Left ventricle myocardium superior (tissue), 1 donor: ENCODE measurements at regions of chr9 and their contacts with region 1.

Region 1: DNA sequence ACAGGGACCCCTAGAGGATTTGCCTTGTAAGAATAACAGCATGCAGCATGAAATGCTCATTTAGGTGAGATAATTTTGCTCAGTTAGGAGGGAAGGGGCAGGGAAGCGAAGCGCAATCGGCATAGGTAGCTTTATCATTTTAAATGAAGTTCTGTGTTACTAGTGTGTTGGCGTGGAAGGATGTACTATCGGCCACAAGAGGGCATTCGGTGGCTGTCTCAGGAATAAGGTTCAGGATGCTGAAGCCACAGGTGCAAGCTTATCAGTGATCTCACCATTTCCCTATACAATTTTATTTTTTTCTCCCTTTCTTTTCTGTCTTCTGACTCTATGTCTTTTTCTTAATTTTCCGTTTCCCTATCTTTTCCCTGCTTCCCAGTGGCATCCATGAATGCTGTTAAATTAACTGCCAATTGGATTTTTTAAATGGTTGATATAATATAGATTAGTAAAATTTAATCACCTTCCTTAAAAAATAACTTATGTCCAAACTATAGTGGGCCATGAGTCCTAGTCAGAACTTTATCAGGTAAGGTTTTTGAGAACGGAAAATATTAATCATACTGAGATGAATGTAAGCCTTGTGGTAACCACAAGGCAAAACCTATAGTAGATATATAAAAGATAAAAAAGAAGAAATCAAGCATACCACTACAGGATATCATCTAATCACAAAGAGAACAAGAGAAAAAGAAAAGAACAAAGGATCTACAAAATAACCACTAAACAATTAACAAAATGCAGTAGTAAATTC is 1.2 kb upstream of the INSL6 start:
- DNase-seq: no peak
- ATAC-seq: peak; percentile 71

Region 2: DNA sequence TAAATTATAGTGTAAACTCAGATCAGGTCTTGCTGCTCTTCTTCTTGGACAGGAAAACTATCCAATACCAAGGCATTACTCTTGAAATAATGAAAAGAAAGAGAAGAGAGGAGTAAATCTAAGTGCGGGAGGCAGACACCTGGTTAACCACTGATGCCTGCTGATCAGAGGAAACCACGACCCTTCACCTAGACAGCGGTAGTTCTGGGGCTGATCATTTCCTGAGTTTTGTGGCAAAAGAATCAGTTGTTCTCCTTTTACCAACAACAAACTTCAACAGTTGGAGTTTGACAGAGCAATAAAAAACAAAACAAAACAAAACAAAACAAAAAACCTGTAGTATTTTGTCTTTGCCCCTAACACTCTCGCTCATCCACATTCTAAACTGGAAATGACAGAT is 150.1 kb after region 1 on chr9:
- intact Hi-C with region 1: no loop called
- DNase-seq: no peak
- ATAC-seq: no peak

Region 3: GRCh38 chr9:5442400-5443011 is 255.9 kb after region 1 on chr9:
- intact Hi-C with region 1: loop called (anchors 10 kb)
- DNase-seq: no peak
- ATAC-seq: no peak

Region 4: GRCh38 chr9:5608298-5609225 is 422.0 kb after region 1 on chr9:
- intact Hi-C with region 1: loop called (anchors 5 kb)
- DNase-seq: no peak
- ATAC-seq: peak; percentile 91